Esophagus muscularis mucosa (tissue), 4 donors: ENCODE measurements at regions of chr19 and their contacts with region 1.

Region 1: GRCh38 chr19:56594783-56595547 is at the start of gene ZNF71:
- DNase-seq: peak; percentile 95
- H3K4me3 ChIP-seq: peak within 1 kb of the TSS; percentile 82 to 99 (median 90)
- H3K27ac ChIP-seq: peak within 1 kb of the TSS; percentile 77 to 80 (median 78)
- H3K4me1 ChIP-seq: peaks cover 10 to 24% (median 13%) of the 10 kb centered on the region in 4 donors
- H3K27me3 ChIP-seq: no peaks in the 10 kb centered on the region
- CTCF ChIP-seq: no peak
- EP300 ChIP-seq: no peak
- POLR2A ChIP-seq: no peak
- total RNA-seq, gene ZNF71: 12.6 to 25.9 (median 19.6) TPM

Region 2: GRCh38 chr19:56403764-56404704 is 190.9 kb before region 1 on chr19 and contains the start of gene ZNF583:
- intact Hi-C with region 1: loop called (anchors 10 kb)
- DNase-seq: peak; percentile 97
- H3K4me3 ChIP-seq: peak within 1 kb of the TSS; percentile 71 to 88 (median 80)
- H3K27ac ChIP-seq: peak within 1 kb of the TSS; percentile 95 to 96 (median 96)
- H3K4me1 ChIP-seq: peaks cover 15 to 21% (median 18%) of the 10 kb centered on the region in 4 donors
- H3K27me3 ChIP-seq: no peaks in the 10 kb centered on the region
- CTCF ChIP-seq: peak in 1 of 3 experiments; percentile 20
- EP300 ChIP-seq: no peak
- POLR2A ChIP-seq: no peak
- total RNA-seq, gene ZNF583: 3.8 to 11.8 (median 6.6) TPM

Region 3: GRCh38 chr19:56554272-56554869 is 40.6 kb before region 1 on chr19:
- intact Hi-C with region 1: no loop called
- DNase-seq: no peak
- H3K4me3 ChIP-seq: peak overlapping the region in 1 of 4 donors; percentile 9
- H3K27ac ChIP-seq: no peak overlapping the region
- H3K4me1 ChIP-seq: no peaks in the 10 kb centered on the region
- H3K27me3 ChIP-seq: no peaks in the 10 kb centered on the region
- CTCF ChIP-seq: no peak
- EP300 ChIP-seq: no peak
- POLR2A ChIP-seq: no peak

Region 4: DNA sequence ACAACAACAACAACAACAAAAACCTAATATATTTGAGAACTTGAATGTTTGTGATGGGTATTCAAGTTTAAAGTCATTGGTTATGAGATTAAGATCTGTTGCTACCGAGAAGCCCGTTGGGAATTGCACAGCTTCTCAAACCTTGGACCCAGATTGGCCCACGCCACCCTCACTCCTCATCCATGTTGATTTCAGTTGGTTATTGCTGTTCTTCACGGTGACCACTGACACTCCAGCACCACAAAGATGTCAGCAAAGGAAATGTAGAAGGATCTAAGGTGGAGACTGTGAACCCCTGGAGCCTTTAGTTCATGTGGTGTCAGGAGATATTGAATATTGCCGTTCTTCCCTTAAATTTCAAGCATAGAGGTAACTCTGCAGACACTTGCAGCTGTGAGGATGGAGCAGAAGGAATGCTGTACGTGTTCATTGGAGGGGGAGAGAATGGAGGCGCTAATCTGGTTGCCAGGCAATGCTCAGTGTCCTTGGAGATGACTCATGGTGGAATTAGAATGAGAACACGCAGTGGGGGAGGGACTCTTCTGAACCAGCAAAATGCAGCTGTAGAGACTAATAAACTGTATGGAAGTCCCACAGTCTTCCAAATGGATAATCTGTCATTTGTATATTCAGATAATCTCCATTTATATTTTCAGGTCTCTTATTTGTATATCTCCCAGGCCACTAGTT is 97.4 kb after region 1 on chr19:
- intact Hi-C with region 1: no loop called
- DNase-seq: no peak
- H3K4me3 ChIP-seq: no peak overlapping the region
- H3K27ac ChIP-seq: no peak overlapping the region
- H3K4me1 ChIP-seq: no peaks in the 10 kb centered on the region
- H3K27me3 ChIP-seq: no peaks in the 10 kb centered on the region
- CTCF ChIP-seq: no peak
- EP300 ChIP-seq: no peak
- POLR2A ChIP-seq: no peak